WTC11 (cell line): ENCODE measurements at regions of chr11 and their contacts with region 1.

Region 1: DNA sequence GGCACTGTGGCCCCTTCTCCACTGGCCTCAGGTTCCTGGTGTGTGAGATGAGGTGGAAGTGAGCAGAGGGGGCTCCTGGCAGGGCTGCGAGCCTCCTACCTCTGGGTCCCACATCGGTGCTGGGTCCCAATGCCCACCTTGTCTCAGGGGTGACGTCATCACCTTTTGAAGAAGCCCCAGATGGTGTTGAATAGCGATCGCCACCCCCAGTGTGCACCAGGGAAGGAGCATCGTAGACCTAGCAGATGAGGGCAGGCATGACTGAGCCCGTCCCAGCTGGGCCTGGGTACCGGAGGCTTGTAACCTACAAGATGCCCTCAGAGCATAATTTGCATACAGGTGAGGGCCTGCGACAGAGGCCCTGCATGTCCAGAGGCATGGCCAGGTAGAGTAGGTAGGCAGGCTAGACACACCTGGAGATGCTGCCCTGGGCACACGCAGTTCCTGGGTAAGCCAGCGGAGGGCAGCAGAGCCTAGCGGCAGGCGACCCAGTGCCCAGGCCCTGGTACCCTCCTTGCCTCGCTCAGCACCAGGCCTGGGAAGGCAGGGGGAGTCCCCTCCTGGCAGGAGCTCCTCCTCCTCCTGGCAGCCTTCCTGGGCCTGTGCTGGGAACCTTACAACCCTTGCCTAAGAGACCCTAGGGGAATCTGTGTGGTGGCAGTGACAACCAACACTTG is 52.5 kb downstream of the TPCN2 start:
- DNase-seq: peak; percentile 83
- ATAC-seq: peak; percentile 91
- H3K4me3 Mint-ChIP-seq: no peak overlapping the region
- H3K27ac Mint-ChIP-seq: no peak overlapping the region
- H3K4me1 Mint-ChIP-seq: peaks cover 3% of the 10 kb centered on the region; the same call in 1 of the 2 replicates
- H3K27me3 Mint-ChIP-seq: no peaks in the 10 kb centered on the region
- CTCF ChIP-seq: peak; percentile 96

Region 2: GRCh38 chr11:69211920-69212571 is 110.8 kb after region 1 on chr11:
- CTCF ChIA-PET with region 1: interaction called, 12 read pairs
- POLR2A ChIA-PET with region 1: no interaction called
- DNase-seq: peak; percentile 13
- ATAC-seq: peak; percentile 20; the same call in 1 of the 2 replicates
- H3K4me3 Mint-ChIP-seq: no peak overlapping the region
- H3K27ac Mint-ChIP-seq: no peak overlapping the region
- H3K4me1 Mint-ChIP-seq: peaks cover 6% of the 10 kb centered on the region; the same call in 1 of the 2 replicates
- H3K27me3 Mint-ChIP-seq: peaks cover 3% of the 10 kb centered on the region; the same call in 1 of the 2 replicates
- CTCF ChIP-seq: no peak

Region 3: GRCh38 chr11:69554894-69555293 is 453.6 kb after region 1 on chr11:
- CTCF ChIA-PET with region 1: interaction called, 3 read pairs
- POLR2A ChIA-PET with region 1: interaction called, 13 read pairs
- DNase-seq: no peak
- ATAC-seq: no peak
- H3K4me3 Mint-ChIP-seq: no peak overlapping the region
- H3K27ac Mint-ChIP-seq: no peak overlapping the region
- H3K4me1 Mint-ChIP-seq: no peaks in the 10 kb centered on the region
- H3K27me3 Mint-ChIP-seq: no peaks in the 10 kb centered on the region
- CTCF ChIP-seq: no peak

Region 4: GRCh38 chr11:69670158-69670845 is 569.0 kb after region 1 on chr11:
- CTCF ChIA-PET with region 1: interaction called, 13 read pairs
- POLR2A ChIA-PET with region 1: no interaction called
- DNase-seq: peak; percentile 89
- ATAC-seq: peak; percentile 76
- H3K4me3 Mint-ChIP-seq: no peak overlapping the region
- H3K27ac Mint-ChIP-seq: peak overlapping the region; percentile 86
- H3K4me1 Mint-ChIP-seq: peaks cover 16% of the 10 kb centered on the region
- H3K27me3 Mint-ChIP-seq: no peaks in the 10 kb centered on the region
- CTCF ChIP-seq: peak; percentile 77